Astrocyte of the cerebellum (primary cell): ENCODE measurements at regions of chr20 and their contacts with region 1.

Region 1: GRCh38 chr20:39623584-39624234 is 661.6 kb downstream of the DHX35 start:
- DNase-seq: peak; percentile 19
- H3K4me3 ChIP-seq: no peak overlapping the region
- CTCF ChIP-seq: no peak

Region 2: DNA sequence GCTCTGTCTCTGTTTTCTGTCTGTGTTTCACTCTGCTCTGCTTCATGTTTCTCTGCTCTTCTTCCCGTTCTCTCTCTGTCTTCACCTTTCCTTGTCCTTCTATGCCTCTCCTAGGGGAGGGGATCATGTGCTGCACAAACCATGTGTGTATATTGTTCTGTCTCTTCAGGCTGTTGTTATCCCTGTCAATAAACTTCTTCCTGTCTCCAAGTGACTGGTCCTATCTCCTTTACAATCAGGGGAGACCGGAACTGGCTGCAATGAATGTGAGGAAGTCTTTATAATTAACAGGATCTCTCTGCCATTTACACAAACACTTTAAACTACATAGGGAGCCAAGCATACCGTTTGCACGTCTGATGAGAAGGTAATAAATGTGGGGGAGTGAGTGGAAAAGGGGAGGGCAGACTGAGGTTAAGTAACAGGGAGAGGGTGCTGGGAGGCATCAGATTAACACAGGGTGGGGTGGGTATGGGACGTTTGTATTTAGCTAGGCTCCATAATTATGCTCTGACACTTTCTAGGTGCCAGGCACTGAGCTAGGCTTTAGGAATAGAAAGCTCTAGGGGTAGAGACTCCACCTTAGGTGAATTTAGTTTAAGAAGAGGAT is 35.5 kb before region 1 on chr20:
- in situ Hi-C with region 1: no loop called
- DNase-seq: no peak
- H3K4me3 ChIP-seq: no peak overlapping the region
- CTCF ChIP-seq: no peak

Region 3: GRCh38 chr20:39661833-39662232 is 38.1 kb after region 1 on chr20:
- in situ Hi-C with region 1: loop called (anchors 5 kb)
- DNase-seq: no peak
- H3K4me3 ChIP-seq: no peak overlapping the region
- CTCF ChIP-seq: no peak

Region 4: GRCh38 chr20:39706184-39706663 is 82.5 kb after region 1 on chr20:
- in situ Hi-C with region 1: no loop called
- DNase-seq: no peak
- H3K4me3 ChIP-seq: no peak overlapping the region
- CTCF ChIP-seq: no peak